Endothelial cell of umbilical vein (primary cell): ENCODE measurements at regions of chr17 and their contacts with region 1.

Region 1: DNA sequence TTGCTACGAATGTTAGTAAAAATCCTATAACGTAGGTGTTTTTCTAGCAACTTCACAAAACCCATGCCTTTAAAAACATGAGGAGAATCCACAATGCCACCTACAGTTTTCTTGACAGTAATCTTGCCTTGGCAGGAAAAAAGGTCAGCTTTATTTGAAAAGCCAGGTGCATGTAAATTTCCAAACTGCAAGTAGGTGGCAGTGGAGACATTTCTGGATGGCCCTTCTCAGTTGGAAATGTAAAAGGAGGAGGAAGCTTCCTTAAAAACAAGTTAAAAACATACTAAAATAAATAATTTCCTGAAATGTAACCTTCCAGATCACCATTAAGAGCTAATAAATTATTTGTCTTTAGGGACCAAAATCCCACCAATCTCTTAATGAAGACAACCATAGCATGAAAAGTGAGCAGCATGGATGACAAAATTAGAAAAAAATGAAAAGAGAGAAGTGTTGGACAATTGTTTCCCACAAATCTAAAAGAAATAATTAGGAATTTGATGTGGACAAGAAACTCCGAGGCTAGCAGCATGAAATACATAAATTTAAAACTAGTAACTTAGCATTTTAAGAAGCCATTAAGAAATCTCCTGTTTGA is 152.2 kb downstream of the SNX11 start:
- DNase-seq: peak; percentile 62
- H3K4me3 ChIP-seq: no peak overlapping the region
- H3K27ac ChIP-seq: no peak overlapping the region
- H3K4me1 ChIP-seq: peaks cover 18% of the 10 kb centered on the region
- H3K27me3 ChIP-seq: no peaks in the 10 kb centered on the region
- CTCF ChIP-seq: peak; percentile 49 to 53
- POLR2A ChIP-seq: no peak

Region 2: DNA sequence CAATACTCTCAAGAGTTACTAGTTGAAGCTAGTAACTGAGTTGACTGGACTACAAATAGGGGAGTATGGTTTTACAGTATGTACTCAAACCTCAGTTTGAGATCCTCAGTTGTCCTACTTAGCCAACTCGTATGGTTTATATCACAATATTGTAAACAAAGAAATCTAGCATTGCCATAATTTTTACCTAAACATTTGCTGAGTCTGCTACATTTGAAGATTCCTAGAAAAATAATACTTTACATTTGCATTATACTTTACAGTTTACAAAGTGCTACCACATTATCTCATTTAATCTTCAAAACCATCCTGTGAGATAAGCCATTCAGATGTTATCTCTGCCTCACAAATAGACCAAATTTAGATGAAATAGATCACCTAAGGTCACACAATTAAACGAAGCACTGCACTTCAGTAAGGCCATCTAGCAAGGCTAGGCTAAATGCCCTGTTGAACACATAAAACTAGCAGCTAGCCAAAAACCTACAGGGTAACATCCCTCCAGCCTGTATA is 174.8 kb before region 1 on chr17:
- CTCF ChIA-PET with region 1: no interaction called
- POLR2A ChIA-PET with region 1: no interaction called
- dilution Hi-C with region 1: no loop called
- intact Hi-C with region 1: no loop called
- DNase-seq: no peak
- H3K4me3 ChIP-seq: no peak overlapping the region
- H3K27ac ChIP-seq: no peak overlapping the region
- H3K4me1 ChIP-seq: peaks cover 4% of the 10 kb centered on the region
- H3K27me3 ChIP-seq: no peaks in the 10 kb centered on the region
- CTCF ChIP-seq: no peak
- POLR2A ChIP-seq: no peak

Region 3: GRCh38 chr17:48161127-48161905 is 98.5 kb before region 1 on chr17:
- CTCF ChIA-PET with region 1: no interaction called
- POLR2A ChIA-PET with region 1: no interaction called
- dilution Hi-C with region 1: no loop called
- intact Hi-C with region 1: no loop called
- DNase-seq: no peak
- H3K4me3 ChIP-seq: no peak overlapping the region
- H3K27ac ChIP-seq: no peak overlapping the region
- H3K4me1 ChIP-seq: no peaks in the 10 kb centered on the region
- H3K27me3 ChIP-seq: peaks cover under 1 to 5% of the 10 kb centered on the region in 2 experiments
- CTCF ChIP-seq: no peak
- POLR2A ChIP-seq: no peak

Region 4: DNA sequence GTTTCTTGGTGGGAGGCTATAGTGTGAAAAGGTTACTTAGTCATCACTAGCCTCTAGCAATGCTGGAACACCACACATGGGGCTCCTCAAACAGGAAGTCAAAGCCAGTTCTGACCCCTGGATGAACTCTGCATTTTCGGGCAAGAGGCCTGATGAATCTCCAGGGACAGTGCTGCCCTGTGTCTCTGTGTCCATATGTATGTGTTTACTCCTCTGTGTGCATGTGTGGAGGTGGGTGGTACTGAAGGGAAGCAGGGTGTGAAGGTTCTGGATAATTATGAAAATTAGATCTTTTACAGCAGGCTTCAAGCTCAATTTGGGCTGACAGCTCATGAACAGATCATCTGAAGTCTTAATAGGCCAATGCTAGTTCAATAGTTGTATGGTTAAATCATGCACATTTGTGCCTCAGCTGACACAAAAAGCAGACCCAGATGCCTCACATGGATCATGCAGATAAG is 18.6 kb before region 1 on chr17:
- CTCF ChIA-PET with region 1: interaction called, 289 read pairs
- POLR2A ChIA-PET with region 1: interaction called, 5 read pairs
- dilution Hi-C with region 1: no loop called
- intact Hi-C with region 1: loop called (anchors 1 kb)
- DNase-seq: peak; percentile 73
- H3K4me3 ChIP-seq: no peak overlapping the region
- H3K27ac ChIP-seq: peak overlapping the region; percentile 90
- H3K4me1 ChIP-seq: peaks cover 92% of the 10 kb centered on the region
- H3K27me3 ChIP-seq: no peaks in the 10 kb centered on the region
- CTCF ChIP-seq: no peak
- POLR2A ChIP-seq: peak; percentile 14

Region 5: DNA sequence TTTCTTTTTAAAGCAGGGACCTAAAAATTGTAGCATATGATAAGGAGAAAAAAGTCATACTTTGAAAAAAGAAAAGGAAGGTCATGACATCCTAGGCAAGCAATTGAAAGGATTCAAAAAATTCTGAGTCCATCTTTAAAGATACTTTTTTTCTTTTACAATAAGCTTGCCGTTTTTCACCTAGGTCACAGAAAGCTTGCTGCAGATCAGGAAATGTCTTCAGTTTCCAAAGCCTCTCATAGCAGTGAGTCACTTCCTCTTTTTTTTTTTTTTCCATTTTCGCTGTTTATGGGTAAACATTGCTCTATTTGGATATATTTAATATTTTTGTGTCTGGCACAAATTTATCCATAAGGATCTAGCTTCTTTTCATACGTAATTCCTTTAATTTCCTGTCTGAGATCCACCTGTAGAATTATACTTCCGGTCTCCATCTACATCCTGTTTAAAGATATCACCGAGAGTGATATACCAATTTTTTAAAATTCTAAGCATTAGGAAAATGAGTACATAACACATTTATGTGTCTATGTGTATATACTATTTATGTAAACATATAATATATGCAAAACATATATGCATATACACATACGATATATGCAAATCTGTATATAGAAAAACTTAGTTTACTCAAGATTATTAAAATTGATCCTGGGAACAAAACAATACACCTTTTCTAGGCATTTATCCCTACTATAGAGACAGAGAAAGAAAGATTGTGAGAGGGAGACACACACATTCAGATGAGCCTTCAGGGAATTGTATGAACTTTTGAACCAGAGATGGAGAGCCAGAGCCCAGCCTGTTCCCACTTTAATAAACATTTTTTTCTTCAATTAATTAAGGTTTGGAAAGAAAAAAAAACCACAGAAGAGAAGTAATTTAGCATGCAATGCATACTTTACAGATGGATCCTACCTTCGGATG is 35.8 kb after region 1 on chr17:
- CTCF ChIA-PET with region 1: interaction called, 23 read pairs
- POLR2A ChIA-PET with region 1: interaction called, 3 read pairs
- dilution Hi-C with region 1: no loop called
- intact Hi-C with region 1: loop called (anchors 1 kb)
- DNase-seq: peak; percentile 76
- H3K4me3 ChIP-seq: peak overlapping the region in 2 of 3 experiments; percentile 10 to 67
- H3K27ac ChIP-seq: peak overlapping the region; percentile 88
- H3K4me1 ChIP-seq: peaks cover 29% of the 10 kb centered on the region
- H3K27me3 ChIP-seq: no peaks in the 10 kb centered on the region
- CTCF ChIP-seq: no peak
- POLR2A ChIP-seq: no peak

Region 6: DNA sequence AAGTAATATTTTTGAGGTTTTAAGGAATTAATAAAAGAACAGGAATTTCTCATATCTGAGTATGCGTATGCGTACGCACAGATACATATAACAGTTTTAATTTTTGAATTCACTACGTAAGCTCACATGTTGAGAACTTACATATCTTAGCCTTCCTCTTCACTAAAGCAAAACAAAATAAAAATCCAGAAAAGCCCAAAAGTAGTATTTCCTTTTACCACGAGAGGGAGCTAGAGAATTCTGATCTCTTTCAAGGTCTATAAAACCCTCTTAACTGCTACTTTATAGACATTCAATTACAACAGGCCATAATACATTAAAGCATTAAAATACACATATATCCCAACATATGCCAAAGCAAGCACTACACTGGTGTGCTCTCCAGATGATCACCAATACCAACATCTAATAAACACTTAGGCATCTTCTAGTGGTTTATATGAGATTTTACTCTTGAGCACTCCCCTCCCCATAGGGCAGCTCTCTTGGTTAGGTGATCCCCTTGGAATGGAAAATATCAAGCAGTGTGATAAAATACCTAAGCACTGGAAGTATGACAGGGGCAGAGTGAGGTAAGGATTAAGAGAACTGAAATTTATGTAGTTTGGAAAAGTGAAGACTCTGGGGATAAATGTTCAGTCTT is 76.2 kb after region 1 on chr17:
- CTCF ChIA-PET with region 1: interaction called, 53 read pairs
- POLR2A ChIA-PET with region 1: no interaction called
- dilution Hi-C with region 1: no loop called
- intact Hi-C with region 1: no loop called
- DNase-seq: peak; percentile 87
- H3K4me3 ChIP-seq: no peak overlapping the region
- H3K27ac ChIP-seq: no peak overlapping the region
- H3K4me1 ChIP-seq: no peaks in the 10 kb centered on the region
- H3K27me3 ChIP-seq: peaks cover 0 to 3% of the 10 kb centered on the region in 2 experiments
- CTCF ChIP-seq: peak; percentile 47 to 55
- POLR2A ChIP-seq: no peak

Region 7: GRCh38 chr17:48444516-48445247 is 184.9 kb after region 1 on chr17:
- CTCF ChIA-PET with region 1: no interaction called
- POLR2A ChIA-PET with region 1: no interaction called
- dilution Hi-C with region 1: no loop called
- intact Hi-C with region 1: no loop called
- DNase-seq: no peak
- H3K4me3 ChIP-seq: no peak overlapping the region
- H3K27ac ChIP-seq: no peak overlapping the region
- H3K4me1 ChIP-seq: peaks cover 5% of the 10 kb centered on the region
- H3K27me3 ChIP-seq: peaks cover 24% of the 10 kb centered on the region in 2 experiments
- CTCF ChIP-seq: no peak
- POLR2A ChIP-seq: no peak

Region 8: GRCh38 chr17:48586355-48587258 is 326.8 kb after region 1 on chr17:
- CTCF ChIA-PET with region 1: interaction called, 22 read pairs
- POLR2A ChIA-PET with region 1: no interaction called
- dilution Hi-C with region 1: no loop called
- intact Hi-C with region 1: no loop called
- DNase-seq: peak; percentile 36
- H3K4me3 ChIP-seq: peak overlapping the region; percentile 33 to 81 (median 61)
- H3K27ac ChIP-seq: peak overlapping the region; percentile 22
- H3K4me1 ChIP-seq: peaks cover 48% of the 10 kb centered on the region
- H3K27me3 ChIP-seq: no peaks in the 10 kb centered on the region
- CTCF ChIP-seq: no peak
- POLR2A ChIP-seq: no peak